H1 (cell line): ENCODE measurements at regions of chr12 and their contacts with region 1.

Region 1: GRCh38 chr12:52561880-52562449 is 9.0 kb upstream of the KRT71 start:
- DNase-seq: no peak
- H3K4me3 ChIP-seq: no peak overlapping the region
- H3K27ac ChIP-seq: no peak overlapping the region
- H3K4me1 ChIP-seq: no peaks in the 10 kb centered on the region
- H3K27me3 ChIP-seq: no peaks in the 10 kb centered on the region
- CTCF ChIP-seq: peak; percentile 47 to 56 (median 56)
- EP300 ChIP-seq: no peak
- POLR2A ChIP-seq: no peak
- RAD21 ChIP-seq: peak; percentile 29 to 46; a peak in 3 of 4 replicates

Region 2: DNA sequence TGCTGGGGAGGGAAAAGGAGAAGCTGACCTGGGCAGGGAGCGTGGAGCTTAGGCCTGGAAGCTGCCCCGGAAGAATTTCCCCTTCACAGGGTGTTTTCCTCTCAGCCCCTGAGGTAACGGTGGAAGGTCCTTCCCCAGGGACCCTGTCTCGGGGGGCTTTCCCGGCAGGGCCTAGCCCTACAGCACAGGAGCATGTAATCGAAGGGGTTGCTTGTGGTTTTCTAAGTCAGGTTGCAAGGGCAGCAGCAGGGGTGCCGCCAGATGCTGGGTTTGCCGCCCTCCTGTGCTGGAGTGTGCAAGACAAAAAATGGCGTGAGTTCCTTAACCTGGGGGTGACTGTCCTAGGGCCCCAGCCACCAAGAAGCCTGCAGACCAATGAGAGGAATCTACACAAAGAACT is 13.3 kb after region 1 on chr12:
- CTCF ChIA-PET with region 1: interaction called, 10 read pairs
- POLR2A ChIA-PET with region 1: no interaction called
- DNase-seq: no peak
- H3K4me3 ChIP-seq: no peak overlapping the region
- H3K27ac ChIP-seq: no peak overlapping the region
- H3K4me1 ChIP-seq: no peaks in the 10 kb centered on the region
- H3K27me3 ChIP-seq: no peaks in the 10 kb centered on the region; a peak in 1 of 7 replicates
- CTCF ChIP-seq: no peak
- EP300 ChIP-seq: no peak
- POLR2A ChIP-seq: no peak
- RAD21 ChIP-seq: no peak

Region 3: GRCh38 chr12:52629281-52630007 is 67.5 kb after region 1 on chr12:
- CTCF ChIA-PET with region 1: no interaction called
- POLR2A ChIA-PET with region 1: no interaction called
- DNase-seq: peak in 1 of 2 experiments; percentile 22
- H3K4me3 ChIP-seq: no peak overlapping the region
- H3K27ac ChIP-seq: no peak overlapping the region
- H3K4me1 ChIP-seq: no peaks in the 10 kb centered on the region
- H3K27me3 ChIP-seq: no peaks in the 10 kb centered on the region; a peak in 2 of 7 replicates
- CTCF ChIP-seq: no peak
- EP300 ChIP-seq: no peak
- POLR2A ChIP-seq: no peak
- RAD21 ChIP-seq: no peak

Region 4: DNA sequence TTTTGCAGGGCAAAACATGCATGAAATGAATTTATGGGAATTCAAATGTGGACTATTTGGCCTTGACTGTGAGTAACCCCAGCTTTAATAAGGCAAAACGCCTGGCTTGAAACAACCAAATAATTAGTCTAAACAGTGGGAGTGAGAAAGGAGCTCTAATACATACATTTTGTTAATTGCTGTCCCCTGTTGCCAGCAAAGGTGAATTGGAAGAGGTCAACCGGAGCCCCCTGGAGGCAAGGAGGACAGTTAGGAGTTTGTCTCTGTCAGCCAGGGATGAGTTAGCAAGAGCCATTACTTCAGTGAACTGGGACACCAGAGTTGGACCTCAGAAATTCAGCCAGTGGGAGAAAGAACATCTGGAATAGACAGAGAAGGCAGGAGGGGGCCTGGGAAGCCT is 197.7 kb after region 1 on chr12:
- CTCF ChIA-PET with region 1: no interaction called
- POLR2A ChIA-PET with region 1: no interaction called
- DNase-seq: no peak
- H3K4me3 ChIP-seq: no peak overlapping the region
- H3K27ac ChIP-seq: no peak overlapping the region
- H3K4me1 ChIP-seq: no peaks in the 10 kb centered on the region
- H3K27me3 ChIP-seq: no peaks in the 10 kb centered on the region; a peak in 1 of 7 replicates
- CTCF ChIP-seq: peak; percentile 23 to 42 (median 27)
- EP300 ChIP-seq: no peak
- POLR2A ChIP-seq: no peak
- RAD21 ChIP-seq: peak; percentile 34 to 46; a peak in 3 of 4 replicates

Region 5: DNA sequence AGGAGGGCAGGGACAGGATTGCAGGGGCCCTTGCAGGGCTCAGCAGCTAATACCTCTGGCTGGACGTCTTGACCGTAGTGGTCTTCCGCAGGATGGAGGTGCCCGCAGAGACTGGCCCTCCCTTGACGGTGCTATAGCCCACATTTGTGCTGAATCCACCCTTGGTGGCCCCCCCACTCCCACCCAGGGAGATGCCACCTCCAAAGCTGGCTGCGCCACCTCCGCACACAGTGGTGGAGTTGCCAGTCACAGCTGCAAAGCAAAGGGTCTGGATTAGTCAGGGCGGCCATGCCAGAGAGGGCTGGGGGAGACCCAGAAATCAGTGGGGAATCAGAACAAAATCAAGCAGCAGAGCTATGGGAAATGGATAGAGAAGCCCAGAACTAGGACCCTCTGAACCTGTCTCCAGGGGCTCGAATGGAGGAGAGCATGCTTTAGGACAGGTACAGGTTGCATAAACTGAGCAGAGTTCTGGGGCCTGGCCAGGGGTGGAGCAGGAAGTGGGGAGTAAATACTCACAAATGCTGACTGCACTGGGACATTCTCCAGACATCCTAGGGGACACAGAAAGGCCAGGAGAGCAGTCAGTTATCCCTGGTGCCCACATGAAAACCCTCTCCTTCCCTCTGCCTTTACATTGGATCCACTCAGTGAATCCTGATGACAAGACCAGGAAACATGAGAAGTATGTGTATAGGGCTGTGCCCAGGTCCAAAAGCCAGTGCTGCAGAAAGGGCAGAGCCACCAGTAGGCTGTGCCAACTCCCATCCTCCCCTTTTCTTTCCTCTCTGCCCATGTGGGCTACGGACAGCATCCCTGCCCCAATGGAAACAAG is 260.1 kb after region 1 on chr12:
- CTCF ChIA-PET with region 1: no interaction called
- POLR2A ChIA-PET with region 1: no interaction called
- DNase-seq: no peak
- H3K4me3 ChIP-seq: no peak overlapping the region
- H3K27ac ChIP-seq: no peak overlapping the region
- H3K4me1 ChIP-seq: no peaks in the 10 kb centered on the region; a peak in 2 of 7 replicates
- H3K27me3 ChIP-seq: 0 out of 7 replicates have a peak, but pooled peaks cover 0 to 2% (median 0%) of the 10 kb centered on the region in 4 experiments
- CTCF ChIP-seq: no peak
- EP300 ChIP-seq: no peak
- POLR2A ChIP-seq: no peak
- RAD21 ChIP-seq: no peak